ENCODE measurements at regions of chr17 and their contacts with region 1.

Region 1: GRCh38 chr17:77963441-77963840 is 4.9 kb downstream of the TNRC6C start:
- DNase-seq: peak; percentile 52
- ATAC-seq: no peak
- H3K4me3 Mint-ChIP-seq: peak overlapping the region; percentile 22
- H3K27ac Mint-ChIP-seq: no peak overlapping the region
- H3K4me1 Mint-ChIP-seq: peaks cover 69% of the 10 kb centered on the region
- H3K27me3 Mint-ChIP-seq: no peaks in the 10 kb centered on the region

Region 2: GRCh38 chr17:77602883-77603671 is 360.4 kb before region 1 on chr17:
- CTCF ChIA-PET with region 1: no interaction called
- POLR2A ChIA-PET with region 1: interaction called, 11 read pairs
- intact Hi-C with region 1: no loop called
- DNase-seq: no peak
- ATAC-seq: no peak
- H3K4me3 Mint-ChIP-seq: no peak overlapping the region
- H3K27ac Mint-ChIP-seq: no peak overlapping the region
- H3K4me1 Mint-ChIP-seq: no peaks in the 10 kb centered on the region
- H3K27me3 Mint-ChIP-seq: no peaks in the 10 kb centered on the region

Region 3: DNA sequence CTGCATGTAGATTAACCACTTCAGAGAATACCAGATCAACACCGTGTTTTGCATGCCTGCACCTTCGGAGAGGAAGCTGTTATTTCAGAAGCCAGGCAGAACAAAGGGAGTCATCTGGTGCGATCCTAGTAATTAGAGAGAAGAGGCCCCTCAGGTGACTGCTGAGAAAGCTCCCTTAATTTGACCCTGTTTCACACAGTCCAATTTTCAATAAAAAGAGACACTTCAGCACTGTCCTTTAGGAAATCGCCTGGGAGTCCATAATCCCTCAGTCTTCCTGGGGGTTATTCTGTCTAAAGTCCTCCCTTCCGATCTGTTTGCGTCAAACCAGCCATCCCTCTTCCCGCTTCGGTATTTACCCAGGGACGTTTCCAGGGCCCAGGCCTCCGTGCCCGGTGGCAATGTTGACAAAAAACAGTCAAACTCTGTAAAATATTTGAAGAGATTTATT is 28.3 kb before region 1 on chr17:
- CTCF ChIA-PET with region 1: no interaction called
- POLR2A ChIA-PET with region 1: no interaction called
- intact Hi-C with region 1: no loop called
- DNase-seq: no peak
- ATAC-seq: no peak
- H3K4me3 Mint-ChIP-seq: no peak overlapping the region
- H3K27ac Mint-ChIP-seq: no peak overlapping the region
- H3K4me1 Mint-ChIP-seq: peaks cover 16% of the 10 kb centered on the region
- H3K27me3 Mint-ChIP-seq: no peaks in the 10 kb centered on the region

Measured in activated CD4-positive, alpha-beta T cell treated with anti-CD3 and anti-CD28 coated beads for 36 hours (primary cell).